ENCODE measurements at regions of chr20 and their contacts with region 1.

Region 1: DNA sequence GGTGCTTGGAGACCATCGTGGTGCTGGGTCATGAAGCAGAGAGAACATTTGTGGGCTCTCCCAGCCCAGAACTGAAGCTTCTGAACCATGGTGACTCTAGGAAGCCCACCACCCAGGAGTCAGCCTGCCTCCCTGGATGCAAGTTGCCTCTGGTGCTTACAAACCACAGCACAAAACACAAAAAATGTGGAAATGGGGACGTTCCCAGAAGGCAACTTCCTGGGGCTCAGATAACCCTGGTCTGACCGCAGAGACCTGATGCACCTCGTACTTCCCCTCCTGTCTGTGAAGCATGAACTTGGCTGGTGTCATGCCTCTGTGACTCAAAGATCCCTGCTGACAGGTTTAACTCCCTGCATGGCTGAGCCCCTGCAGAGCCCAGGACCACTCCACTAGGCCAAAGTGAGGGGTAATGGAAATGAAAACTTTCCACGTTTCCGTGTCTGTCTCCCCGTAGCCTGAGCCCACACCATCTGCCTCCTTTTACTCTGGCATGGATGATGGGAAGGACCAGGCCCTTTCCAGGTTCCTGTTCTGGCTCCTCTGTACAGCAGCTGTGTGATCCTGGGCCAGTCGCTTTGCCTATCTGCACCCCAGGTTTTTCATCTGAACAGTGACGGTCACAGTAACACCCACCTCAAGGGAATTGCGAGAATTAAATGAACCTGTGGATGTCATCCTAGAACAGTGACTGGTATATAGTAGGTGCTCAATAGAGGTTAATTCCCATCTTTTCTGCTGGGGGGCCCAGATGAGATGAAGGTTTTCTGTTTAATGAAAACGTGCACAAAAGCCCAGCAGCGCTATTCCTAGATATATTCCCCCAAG is 57.7 kb downstream of the PPP1R16B start:
- DNase-seq: peak; percentile 52
- ATAC-seq: peak; percentile 78
- H3K4me3 Mint-ChIP-seq: peak overlapping the region; percentile 76
- H3K27ac Mint-ChIP-seq: peak overlapping the region; percentile 95
- H3K4me1 Mint-ChIP-seq: peaks cover 94% of the 10 kb centered on the region
- H3K27me3 Mint-ChIP-seq: no peaks in the 10 kb centered on the region
- CTCF ChIP-seq: no peak

Region 2: DNA sequence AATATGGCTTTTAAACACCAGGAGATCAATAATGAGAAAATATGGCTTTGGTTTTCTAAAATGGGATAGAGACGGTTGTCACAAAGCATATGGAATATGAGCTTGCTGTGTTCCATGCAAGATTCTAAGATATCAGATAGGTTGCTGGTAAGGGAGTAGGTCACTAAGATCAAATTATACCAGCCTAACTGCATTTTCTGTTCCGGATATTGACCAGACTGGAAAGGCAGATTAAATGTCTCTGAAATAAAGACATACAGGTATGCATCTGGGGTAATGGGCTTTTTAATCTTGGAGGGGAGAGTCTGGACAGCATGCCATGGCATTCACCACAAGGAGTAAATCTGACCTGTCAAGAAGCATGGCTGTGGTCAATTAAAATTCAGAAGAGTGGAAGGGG is 317.5 kb before region 1 on chr20:
- CTCF ChIA-PET with region 1: no interaction called
- POLR2A ChIA-PET with region 1: interaction called, 11 read pairs
- intact Hi-C with region 1: no loop called
- DNase-seq: no peak
- ATAC-seq: no peak
- H3K4me3 Mint-ChIP-seq: no peak overlapping the region
- H3K27ac Mint-ChIP-seq: no peak overlapping the region
- H3K4me1 Mint-ChIP-seq: no peaks in the 10 kb centered on the region
- H3K27me3 Mint-ChIP-seq: no peaks in the 10 kb centered on the region
- CTCF ChIP-seq: no peak

Region 3: GRCh38 chr20:38875175-38875993 is 12.1 kb after region 1 on chr20:
- CTCF ChIA-PET with region 1: interaction called, 7 read pairs
- POLR2A ChIA-PET with region 1: interaction called, 268 read pairs
- intact Hi-C with region 1: loop called (anchors 1 kb)
- DNase-seq: peak; percentile 60
- ATAC-seq: peak; percentile 63
- H3K4me3 Mint-ChIP-seq: peak overlapping the region; percentile 83
- H3K27ac Mint-ChIP-seq: peak overlapping the region; percentile 97
- H3K4me1 Mint-ChIP-seq: peaks cover 98% of the 10 kb centered on the region
- H3K27me3 Mint-ChIP-seq: no peaks in the 10 kb centered on the region
- CTCF ChIP-seq: no peak

Region 4: GRCh38 chr20:38997622-38998021 is 134.4 kb after region 1 on chr20:
- CTCF ChIA-PET with region 1: no interaction called
- POLR2A ChIA-PET with region 1: no interaction called
- intact Hi-C with region 1: no loop called
- DNase-seq: no peak
- ATAC-seq: peak; percentile 56
- H3K4me3 Mint-ChIP-seq: no peak overlapping the region
- H3K27ac Mint-ChIP-seq: no peak overlapping the region
- H3K4me1 Mint-ChIP-seq: peaks cover 4% of the 10 kb centered on the region
- H3K27me3 Mint-ChIP-seq: no peaks in the 10 kb centered on the region
- CTCF ChIP-seq: no peak